SK-MEL-5 (cell line): ENCODE measurements at regions of chr9 and their contacts with region 1.

Region 1: DNA sequence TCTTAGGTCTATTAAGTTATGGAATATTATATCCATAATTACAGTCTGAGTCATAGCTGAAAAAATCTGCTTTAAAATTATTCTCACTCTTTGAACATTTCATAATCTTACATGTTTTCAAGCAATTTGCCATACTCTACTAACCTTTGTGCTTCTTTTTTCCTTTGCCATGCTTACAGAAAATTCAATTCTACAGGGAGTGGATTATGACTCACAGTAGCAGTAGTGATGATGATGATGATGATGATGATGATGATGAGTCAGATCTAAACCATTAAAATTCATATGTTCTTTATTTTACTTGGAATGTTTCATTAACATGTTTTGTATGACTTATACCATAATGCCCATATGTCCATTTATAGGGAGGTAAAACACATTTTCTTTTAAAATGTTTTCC is 207.1 kb downstream of the VPS13A start:
- DNase-seq: no peak

Region 2: DNA sequence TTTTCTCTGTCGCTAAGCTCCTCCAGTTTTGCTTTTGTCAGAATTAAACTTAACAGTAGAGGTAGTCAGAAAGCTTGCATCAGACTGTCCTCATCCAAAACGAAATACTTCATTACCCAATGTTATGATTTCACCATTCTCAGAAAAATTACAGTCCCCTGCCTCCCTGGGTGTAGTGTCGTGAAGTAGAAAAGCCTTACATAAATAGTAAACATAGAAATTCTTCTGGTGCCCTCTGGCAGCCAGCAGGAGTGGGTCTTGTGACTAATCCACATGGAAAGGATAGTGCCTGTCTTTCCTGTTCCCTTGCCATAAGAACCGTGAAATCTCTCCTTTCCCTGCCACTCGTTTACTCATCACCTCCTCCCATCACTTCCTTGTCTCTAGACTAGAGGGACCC is 33.2 kb after region 1 on chr9:
- in situ Hi-C with region 1: loop called (anchors 5 kb)
- DNase-seq: peak; percentile 93